A549 (cell line): ENCODE measurements at regions of chr17 and their contacts with region 1.

Region 1: DNA sequence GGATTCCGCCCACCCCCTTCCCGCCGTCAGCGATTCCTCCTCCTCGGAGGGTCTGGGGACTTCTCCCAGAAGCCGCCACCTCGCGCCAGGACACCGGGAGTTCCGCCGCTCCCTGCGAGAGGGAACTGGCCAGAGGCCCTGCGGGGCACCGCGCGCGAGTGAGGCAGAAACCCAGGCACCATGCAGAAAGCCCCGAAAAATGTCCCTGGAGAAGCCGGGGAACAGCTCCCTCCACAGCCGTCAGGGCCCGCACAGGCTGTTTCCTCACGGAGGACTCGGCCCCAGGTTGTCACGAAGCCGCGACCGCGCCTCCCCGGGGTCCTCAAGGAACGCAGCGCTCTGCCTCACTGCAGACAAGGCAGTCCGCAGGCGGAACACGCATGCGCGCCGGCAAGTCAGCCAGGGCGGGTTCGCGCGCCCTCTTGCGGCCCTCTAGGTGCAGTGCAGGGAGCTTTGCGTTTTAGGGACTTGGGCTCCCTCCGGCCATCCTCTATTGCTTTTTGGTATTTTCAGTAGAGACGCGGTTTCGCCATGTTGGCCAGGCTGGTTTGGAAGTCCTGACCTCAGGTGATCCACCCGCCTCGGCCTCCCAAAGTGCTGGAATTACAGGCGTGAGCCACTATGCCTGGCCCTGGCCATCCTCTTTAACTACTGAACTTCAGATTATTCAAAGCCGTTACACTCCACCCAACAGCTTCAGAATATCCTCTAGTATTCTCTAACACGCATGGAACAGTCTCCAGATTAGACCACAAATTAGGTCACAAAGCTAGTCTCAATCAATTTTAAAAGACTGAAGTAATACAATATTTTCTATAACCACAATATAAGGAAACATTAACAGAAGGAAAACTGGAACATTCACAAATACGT is 20.3 kb upstream of the ZNF287 start:
- DNase-seq: peak; percentile 92 to 93
- ATAC-seq: peak; percentile 93 to 94
- H3K4me3 ChIP-seq: peak overlapping the region; percentile 55
- H3K27ac ChIP-seq: peak overlapping the region; percentile 76 to 87
- H3K4me1 ChIP-seq: 0 out of 3 replicates have a peak, but pooled peaks cover 3% of the 10 kb centered on the region
- CTCF ChIP-seq: peak; percentile 96
- EP300 ChIP-seq: no peak
- POLR2A ChIP-seq: peak; percentile 68
- RAD21 ChIP-seq: peak; percentile 74 to 79

Region 2: GRCh38 chr17:16573466-16573865 is 15.9 kb before region 1 on chr17:
- CTCF ChIA-PET with region 1: interaction called, 24 read pairs
- POLR2A ChIA-PET with region 1: no interaction called
- DNase-seq: no peak
- ATAC-seq: no peak
- H3K4me3 ChIP-seq: no peak overlapping the region
- H3K27ac ChIP-seq: no peak overlapping the region
- H3K4me1 ChIP-seq: no peaks in the 10 kb centered on the region
- CTCF ChIP-seq: no peak
- EP300 ChIP-seq: no peak
- POLR2A ChIP-seq: no peak
- RAD21 ChIP-seq: no peak

Region 3: DNA sequence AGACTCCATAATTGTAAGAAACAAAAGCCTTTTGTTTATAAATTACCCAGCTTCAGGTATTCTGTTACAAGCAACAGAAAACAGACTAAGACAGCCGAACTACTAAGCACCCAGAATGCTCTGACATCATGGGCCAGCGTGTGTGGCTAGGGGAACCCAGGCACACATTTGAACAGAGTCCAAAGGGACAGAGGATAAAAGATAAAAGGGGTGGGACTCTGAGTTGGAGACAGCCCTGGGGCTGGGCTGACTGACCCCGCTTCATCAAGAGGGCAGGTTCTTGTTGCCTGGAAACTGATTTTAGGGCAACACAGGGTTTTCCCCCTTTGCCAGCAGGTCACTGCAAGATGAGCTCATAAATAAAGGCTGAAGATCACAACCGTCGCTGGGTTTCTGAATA is 10.2 kb after region 1 on chr17:
- CTCF ChIA-PET with region 1: interaction called, 14 read pairs
- POLR2A ChIA-PET with region 1: no interaction called
- DNase-seq: no peak
- ATAC-seq: no peak
- H3K4me3 ChIP-seq: no peak overlapping the region
- H3K27ac ChIP-seq: no peak overlapping the region
- H3K4me1 ChIP-seq: no peaks in the 10 kb centered on the region
- CTCF ChIP-seq: no peak
- EP300 ChIP-seq: no peak
- POLR2A ChIP-seq: no peak
- RAD21 ChIP-seq: no peak

Region 4: GRCh38 chr17:17237026-17237799 is 647.9 kb after region 1 on chr17 and contains the start of gene FLCN:
- CTCF ChIA-PET with region 1: no interaction called
- POLR2A ChIA-PET with region 1: no interaction called
- DNase-seq: peak; percentile 91 to 92
- ATAC-seq: peak; percentile 90 to 92
- H3K4me3 ChIP-seq: peak within 1 kb of the TSS; percentile 85
- H3K27ac ChIP-seq: peak within 1 kb of the TSS; percentile 82 to 97
- H3K4me1 ChIP-seq: peaks cover 16% of the 10 kb centered on the region
- CTCF ChIP-seq: no peak
- EP300 ChIP-seq: no peak
- POLR2A ChIP-seq: peak; percentile 85
- RAD21 ChIP-seq: no peak
- polyA plus RNA-seq, gene FLCN: 14.2 and 16.1 TPM in 2 replicates